Caco-2 (cell line): ENCODE measurements at regions of chr14 and their contacts with region 1.

Region 1: GRCh38 chr14:100155042-100155846 is 4.2 kb downstream of the DEGS2 start:
- DNase-seq: peak in 1 of 2 experiments; percentile 55
- H3K4me3 ChIP-seq: no peak overlapping the region
- H3K4me3 Mint-ChIP-seq: no peak overlapping the region
- H3K27ac Mint-ChIP-seq: no peak overlapping the region
- H3K4me1 ChIP-seq: peaks cover 13% of the 10 kb centered on the region; the same call in 1 of the 2 replicates
- H3K4me1 Mint-ChIP-seq: no peaks in the 10 kb centered on the region
- H3K27me3 ChIP-seq: no peaks in the 10 kb centered on the region; the same call in 1 of the 2 replicates
- H3K27me3 Mint-ChIP-seq: no peaks in the 10 kb centered on the region
- CTCF ChIP-seq: peak; percentile 61 to 64

Region 2: DNA sequence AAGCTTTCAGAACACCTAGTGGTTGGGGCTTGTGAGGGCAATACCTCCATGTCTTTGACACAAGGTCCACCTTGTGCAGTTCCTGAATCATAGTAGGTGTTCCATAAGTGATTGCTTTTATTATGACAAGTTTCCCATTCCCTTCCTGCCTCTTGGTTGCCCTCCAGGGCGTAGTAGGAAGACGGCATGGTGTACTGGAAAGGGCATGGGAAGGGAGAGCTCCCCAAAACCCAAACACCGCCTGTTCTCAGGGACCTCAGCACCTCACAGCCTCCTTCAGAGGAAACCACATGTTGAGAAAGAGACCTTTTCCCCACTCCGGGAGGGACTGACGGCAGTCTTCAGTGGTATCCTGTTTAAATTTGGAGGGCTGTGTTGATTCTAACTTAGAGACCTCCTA is 68.9 kb before region 1 on chr14:
- CTCF ChIA-PET with region 1: no interaction called
- POLR2A ChIA-PET with region 1: no interaction called
- intact Hi-C with region 1: no loop called
- DNase-seq: no peak
- H3K4me3 ChIP-seq: no peak overlapping the region
- H3K4me3 Mint-ChIP-seq: no peak overlapping the region
- H3K27ac Mint-ChIP-seq: no peak overlapping the region
- H3K4me1 ChIP-seq: no peaks in the 10 kb centered on the region
- H3K4me1 Mint-ChIP-seq: no peaks in the 10 kb centered on the region
- H3K27me3 ChIP-seq: no peaks in the 10 kb centered on the region
- H3K27me3 Mint-ChIP-seq: peaks cover 7% of the 10 kb centered on the region
- CTCF ChIP-seq: no peak

Region 3: GRCh38 chr14:100122481-100123222 is 32.6 kb before region 1 on chr14:
- CTCF ChIA-PET with region 1: interaction called, 7 read pairs
- POLR2A ChIA-PET with region 1: no interaction called
- intact Hi-C with region 1: loop called (anchors 5 kb)
- DNase-seq: peak in 1 of 2 experiments; percentile 52
- H3K4me3 ChIP-seq: no peak overlapping the region
- H3K4me3 Mint-ChIP-seq: no peak overlapping the region
- H3K27ac Mint-ChIP-seq: no peak overlapping the region
- H3K4me1 ChIP-seq: no peaks in the 10 kb centered on the region
- H3K4me1 Mint-ChIP-seq: peaks cover 5% of the 10 kb centered on the region
- H3K27me3 ChIP-seq: no peaks in the 10 kb centered on the region
- H3K27me3 Mint-ChIP-seq: no peaks in the 10 kb centered on the region
- CTCF ChIP-seq: peak; percentile 30 to 75